Activated T-helper 1 cell treated with anti-CD3 and anti-CD28 coated beads, Interleukin-12 subunit alpha, Interleukin-12 subunit beta, Interleukin-2, Interleukin-4 antibody, amounts not matched to agents 30 ng/mL and 10 ng/mL and 1 ng/mL, durations not matched to agents 14 hours and 24 hours and 36 hours (primary cell): ENCODE measurements at regions of chr17 and their contacts with region 1.

Region 1: GRCh38 chr17:17792551-17793377 is 44.0 kb downstream of the SREBF1 start:
- DNase-seq: peak; percentile 68
- H3K4me3 Mint-ChIP-seq: peak overlapping the region; percentile 42
- H3K27ac Mint-ChIP-seq: peak overlapping the region; percentile 84
- H3K4me1 Mint-ChIP-seq: peaks cover 26% of the 10 kb centered on the region
- H3K27me3 Mint-ChIP-seq: no peaks in the 10 kb centered on the region

Region 2: DNA sequence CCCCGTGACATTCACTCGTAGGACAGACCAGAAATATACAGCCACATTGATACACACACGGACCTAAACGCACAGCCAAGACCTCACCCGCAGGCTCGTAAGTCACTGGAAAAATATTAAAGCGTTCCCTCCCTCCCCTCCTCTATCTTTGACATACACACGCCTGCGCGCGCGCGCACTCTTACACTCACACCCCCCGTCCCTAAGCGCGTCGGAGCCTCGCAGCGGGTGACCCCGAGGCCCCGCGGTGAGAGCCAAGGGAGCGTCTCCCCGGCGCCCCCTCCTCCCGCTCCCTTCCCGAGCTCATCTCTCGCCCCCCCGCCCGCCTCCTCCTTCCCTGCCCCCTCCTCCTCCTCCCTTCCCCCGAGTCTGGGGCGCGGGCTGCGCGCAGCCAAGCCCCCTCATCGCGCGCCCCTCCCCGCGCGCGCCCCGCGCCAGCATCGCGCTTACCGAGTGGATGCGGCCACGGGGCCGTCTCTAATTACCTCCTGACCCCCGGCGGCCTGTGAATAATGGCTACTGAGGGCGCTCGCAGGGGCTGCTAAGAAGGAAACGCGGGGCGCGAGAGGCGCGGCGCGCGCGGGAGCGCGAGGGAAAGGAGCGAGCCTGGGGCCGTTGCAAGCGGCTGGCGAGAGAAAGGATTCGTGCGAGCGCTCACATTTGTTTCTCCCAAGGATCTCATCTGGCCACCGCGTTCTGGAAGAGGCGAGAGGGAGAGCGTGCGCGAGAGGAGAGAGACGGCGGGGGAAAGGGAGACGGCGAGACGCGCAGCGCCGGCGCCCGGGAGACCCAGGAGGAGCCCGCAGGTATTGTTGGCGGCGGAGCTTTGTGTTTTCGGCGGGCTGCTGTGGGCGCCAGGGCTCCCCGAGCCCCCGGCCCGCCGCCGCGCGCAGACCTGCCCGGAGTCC is 69.2 kb before region 1 on chr17:
- intact Hi-C with region 1: loop called (anchors 2 kb)
- DNase-seq: no peak
- H3K4me3 Mint-ChIP-seq: peak overlapping the region; percentile 81
- H3K27ac Mint-ChIP-seq: peak overlapping the region; percentile 2
- H3K4me1 Mint-ChIP-seq: peaks cover 26% of the 10 kb centered on the region
- H3K27me3 Mint-ChIP-seq: peaks cover 38% of the 10 kb centered on the region

Region 3: GRCh38 chr17:17888821-17889220 is 96.1 kb after region 1 on chr17:
- intact Hi-C with region 1: no loop called
- DNase-seq: no peak
- H3K4me3 Mint-ChIP-seq: no peak overlapping the region
- H3K27ac Mint-ChIP-seq: no peak overlapping the region
- H3K4me1 Mint-ChIP-seq: peaks cover 8% of the 10 kb centered on the region
- H3K27me3 Mint-ChIP-seq: peaks cover 1% of the 10 kb centered on the region